Activated naive CD8-positive, alpha-beta T cell treated with anti-CD3 and anti-CD28 coated beads, Interleukin-2, amount 10 ng/mL, durations not matched to agents 7 days and 5 days (primary cell): ENCODE measurements at regions of chr19 and their contacts with region 1.

Region 1: GRCh38 chr19:43595999-43596841 is at the starts of genes IRGQ and ZNF576:
- DNase-seq: peak; percentile 100
- ATAC-seq: peak; percentile 86
- H3K4me3 Mint-ChIP-seq: peak within 1 kb of the TSS; percentile 94
- H3K27ac Mint-ChIP-seq: peak within 1 kb of the TSS; percentile 97
- H3K4me1 Mint-ChIP-seq: peaks cover 33% of the 10 kb centered on the region
- H3K27me3 Mint-ChIP-seq: no peaks in the 10 kb centered on the region
- total RNA-seq, gene IRGQ: 12.4 to 13.9 TPM
- total RNA-seq, gene ZNF576: 15.3 to 17.8 TPM

Region 2: DNA sequence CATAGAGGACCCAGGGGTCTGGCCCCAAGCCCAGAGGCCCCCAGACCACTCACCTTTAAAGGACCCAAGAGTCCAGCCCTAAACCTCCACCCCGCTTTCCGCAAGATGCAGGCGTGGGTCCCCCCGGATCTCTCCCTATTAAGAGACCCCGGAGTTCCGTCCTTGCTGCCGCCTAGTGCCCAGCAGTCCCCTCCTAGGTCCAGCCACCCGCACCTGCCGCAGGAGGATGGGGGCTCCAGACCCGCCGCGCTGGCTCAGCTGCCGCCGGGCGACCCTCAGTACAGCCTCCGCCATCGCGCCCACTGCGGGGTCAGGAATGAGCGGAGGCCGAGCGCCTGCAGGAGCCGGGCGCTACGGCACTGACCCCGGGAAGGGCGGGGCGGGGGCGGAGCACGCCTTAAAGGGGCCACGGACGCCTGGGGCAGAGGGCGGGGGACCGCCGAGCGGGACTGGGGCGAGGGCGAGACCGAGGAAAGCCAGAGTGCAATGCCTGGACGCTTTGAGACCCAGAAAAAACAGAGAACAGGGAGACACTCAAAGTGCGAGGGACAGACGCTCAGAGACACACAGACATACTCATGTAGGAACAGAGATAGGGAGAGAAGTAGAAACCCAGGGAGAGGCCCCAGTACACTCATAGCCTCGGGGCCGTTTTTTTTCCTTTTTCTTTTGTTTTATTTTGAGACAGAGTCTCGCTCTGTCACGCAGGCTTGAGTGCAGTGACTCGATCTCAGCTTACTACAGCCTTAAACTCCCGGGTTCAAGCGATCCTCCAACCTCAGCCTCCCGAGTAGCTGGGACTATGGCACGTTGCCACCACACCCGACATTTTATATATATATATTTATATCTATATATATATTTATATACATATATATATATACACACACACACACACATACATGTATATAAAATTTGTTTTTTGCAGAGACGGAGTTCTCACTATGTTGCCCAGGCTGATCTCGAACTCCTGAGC is 69.0 kb before region 1 on chr19 and contains the start of gene ETHE1:
- POLR2A ChIA-PET with region 1: interaction called, 25 read pairs
- DNase-seq: peak; percentile 89
- ATAC-seq: peak; percentile 87
- H3K4me3 Mint-ChIP-seq: peak within 1 kb of the TSS; percentile 80
- H3K27ac Mint-ChIP-seq: peak within 1 kb of the TSS; percentile 82
- H3K4me1 Mint-ChIP-seq: peaks cover 20% of the 10 kb centered on the region
- H3K27me3 Mint-ChIP-seq: no peaks in the 10 kb centered on the region
- total RNA-seq, gene ETHE1: 57.1 to 61.1 TPM

Region 3: DNA sequence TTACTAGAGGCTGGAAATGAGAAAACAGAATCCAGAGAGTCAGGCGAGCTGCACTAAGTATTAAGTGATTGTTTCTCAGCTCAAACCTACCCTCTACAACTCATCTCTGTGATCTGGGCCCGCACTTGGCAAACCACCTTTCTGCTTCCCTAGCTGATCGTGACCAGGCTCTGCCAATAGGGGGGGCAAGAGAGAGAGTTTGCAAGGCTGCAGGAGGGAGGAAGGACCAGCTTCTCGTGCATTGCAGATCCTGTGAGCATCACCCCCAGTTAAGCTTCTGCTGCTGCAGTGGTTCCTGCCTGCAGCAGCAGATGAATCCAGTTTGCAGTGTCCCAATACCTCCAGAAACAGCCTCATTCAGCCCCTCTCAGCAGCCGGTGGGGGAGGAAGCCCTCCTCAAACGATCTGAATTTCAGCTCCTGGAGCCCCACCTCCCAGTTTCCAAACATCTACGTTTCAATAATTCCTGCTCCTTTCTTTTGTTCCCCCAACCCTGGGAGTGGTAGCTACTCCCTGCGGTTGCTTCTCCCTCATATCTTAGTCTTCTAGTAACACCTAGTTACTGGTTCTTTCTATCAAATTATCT is 40.9 kb before region 1 on chr19:
- POLR2A ChIA-PET with region 1: interaction called, 30 read pairs
- DNase-seq: peak; percentile 80
- ATAC-seq: peak; percentile 97
- H3K4me3 Mint-ChIP-seq: no peak overlapping the region
- H3K27ac Mint-ChIP-seq: peak overlapping the region; percentile 44
- H3K4me1 Mint-ChIP-seq: peaks cover 5% of the 10 kb centered on the region
- H3K27me3 Mint-ChIP-seq: no peaks in the 10 kb centered on the region

Region 4: DNA sequence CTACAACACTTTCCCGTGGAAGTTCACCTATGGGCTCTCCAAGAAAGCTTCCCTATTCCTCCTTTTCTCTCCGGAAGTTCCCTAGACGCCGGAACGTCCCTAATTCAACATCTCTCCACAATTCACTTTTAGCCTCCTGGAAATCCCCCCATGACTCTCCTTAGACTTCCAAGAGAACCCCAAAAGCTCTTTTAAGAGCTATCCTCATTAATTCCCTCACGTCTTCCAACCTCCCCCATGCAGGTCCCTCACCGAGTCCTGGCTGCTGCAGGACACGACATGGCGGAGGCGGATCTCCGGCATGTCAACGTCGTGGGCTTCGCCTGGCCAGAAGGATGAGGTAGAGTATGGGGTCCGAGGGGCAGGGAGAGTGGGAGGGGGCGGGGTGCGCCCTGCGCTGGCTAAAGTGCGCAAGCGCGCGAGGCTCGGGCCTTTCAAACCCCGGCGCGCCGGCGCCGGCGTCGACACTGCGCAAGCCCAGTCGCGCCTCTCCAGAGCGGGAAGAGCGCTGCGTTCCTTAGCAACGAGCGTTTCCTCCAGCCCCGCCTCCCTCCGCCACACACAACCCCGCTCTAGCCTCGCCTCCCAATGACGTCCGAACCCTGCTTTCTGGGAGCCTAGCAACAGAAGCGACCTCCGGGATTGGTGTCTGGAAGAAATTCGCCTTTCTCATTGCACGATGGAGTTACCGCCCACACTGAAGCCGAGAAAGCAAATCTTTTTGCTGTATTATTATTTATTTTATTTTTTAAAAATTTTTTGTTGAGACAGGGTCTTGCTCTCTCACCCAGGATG is 20.9 kb before region 1 on chr19 and contains the starts of genes PINLYP and XRCC1:
- POLR2A ChIA-PET with region 1: interaction called, 45 read pairs
- DNase-seq: peak; percentile 91
- ATAC-seq: peak; percentile 97
- H3K4me3 Mint-ChIP-seq: peak within 1 kb of the TSS; percentile 97
- H3K27ac Mint-ChIP-seq: peak within 1 kb of the TSS; percentile 92
- H3K4me1 Mint-ChIP-seq: peaks cover 30% of the 10 kb centered on the region
- H3K27me3 Mint-ChIP-seq: no peaks in the 10 kb centered on the region
- total RNA-seq, gene PINLYP: 11.7 to 15.6 TPM
- total RNA-seq, gene XRCC1: 40.0 to 43.2 TPM

Region 5: DNA sequence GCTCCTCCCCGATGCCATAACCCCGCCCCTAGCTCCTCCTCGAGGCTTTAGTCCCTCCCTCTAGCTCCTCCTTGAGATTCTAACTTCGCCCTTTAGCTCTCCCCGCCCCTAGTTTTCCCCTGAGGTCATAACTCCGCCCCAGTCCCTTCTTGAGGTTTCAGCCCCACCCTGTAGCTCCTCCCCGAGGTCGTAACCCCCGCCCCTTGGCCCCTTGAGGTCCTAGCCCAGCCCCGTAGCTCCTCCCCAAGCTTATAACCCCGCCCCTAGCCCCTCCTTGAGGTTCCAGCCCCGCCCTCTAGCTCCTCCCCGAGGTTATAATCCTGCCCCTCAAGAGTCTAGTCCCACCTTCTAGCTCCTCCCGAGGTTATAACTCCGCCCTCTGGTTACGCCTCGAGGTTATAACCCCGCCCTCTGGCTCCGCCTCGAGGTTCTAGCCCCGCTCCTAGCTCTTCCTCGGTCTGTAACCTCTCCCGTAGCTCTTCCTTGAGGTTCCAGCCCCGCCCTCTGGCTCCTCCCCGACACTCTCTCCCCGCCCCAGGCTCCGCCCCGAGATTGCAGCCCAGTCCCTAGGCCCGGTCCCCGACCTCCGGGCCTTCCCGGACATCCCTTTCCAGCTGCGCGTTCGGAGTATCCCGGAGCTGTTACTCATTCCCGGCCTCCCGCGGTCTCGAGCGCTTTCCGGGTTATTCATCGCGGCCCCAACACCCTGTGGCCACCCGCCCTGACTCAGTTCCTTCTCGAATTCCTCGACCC is 72.4 kb after region 1 on chr19:
- POLR2A ChIA-PET with region 1: no interaction called
- DNase-seq: peak; percentile 94
- ATAC-seq: peak; percentile 86
- H3K4me3 Mint-ChIP-seq: peak overlapping the region; percentile 94
- H3K27ac Mint-ChIP-seq: peak overlapping the region; percentile 91
- H3K4me1 Mint-ChIP-seq: peaks cover 33% of the 10 kb centered on the region
- H3K27me3 Mint-ChIP-seq: peaks cover 3% of the 10 kb centered on the region